ENCODE measurements at regions of chr11 and their contacts with region 1.

Region 1: DNA sequence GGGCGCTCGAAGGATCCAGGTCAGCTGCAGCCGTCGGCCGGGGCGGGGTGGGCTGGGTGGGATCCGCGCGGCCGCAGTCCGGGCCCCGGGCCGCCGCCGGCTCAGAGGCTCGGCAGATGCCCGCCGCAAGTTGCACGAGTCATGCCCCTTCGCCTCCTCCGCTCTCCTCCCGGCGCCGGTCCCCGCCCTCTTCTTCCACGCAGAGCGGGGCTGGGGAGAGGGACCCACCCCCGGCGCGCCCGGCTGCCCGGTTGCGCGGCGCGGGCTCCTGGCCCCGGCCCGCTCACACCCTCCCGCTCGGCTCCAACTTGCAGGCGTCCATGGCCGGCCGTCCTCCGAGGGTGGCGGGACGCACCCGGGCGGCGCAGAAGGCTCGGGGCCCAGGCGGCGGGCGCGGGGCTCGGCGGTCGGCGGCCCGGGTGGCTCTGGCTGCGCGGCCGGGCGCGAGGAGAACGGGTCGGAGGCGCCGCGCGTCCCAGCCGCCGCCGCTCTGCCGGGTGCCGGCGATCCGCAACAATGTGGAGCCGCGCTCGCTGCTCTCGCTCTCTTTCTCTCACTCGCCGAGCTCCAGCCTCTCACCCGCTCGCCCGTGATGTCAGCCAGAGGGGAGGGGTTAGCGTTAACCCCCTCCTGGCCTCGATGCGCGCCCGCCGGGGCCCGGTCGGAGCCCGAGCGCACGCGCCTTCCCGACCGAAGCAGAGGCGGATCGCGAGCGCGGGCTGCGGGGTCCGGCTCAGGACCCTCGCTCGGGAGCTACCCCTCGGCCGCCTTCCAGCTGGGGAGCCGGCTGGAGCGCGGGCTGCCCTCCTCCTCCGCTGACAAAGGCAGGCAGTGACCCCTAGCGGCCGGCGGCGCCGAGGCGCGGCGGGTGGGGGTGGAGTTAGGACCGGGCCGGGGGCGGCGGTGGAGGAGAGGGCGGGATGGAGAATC is at the start of gene NECTIN1:
- DNase-seq: peak; percentile 88
- H3K4me3 Mint-ChIP-seq: peak within 1 kb of the TSS; percentile 81
- H3K27ac Mint-ChIP-seq: no peak within 1 kb of the TSS
- H3K4me1 Mint-ChIP-seq: peaks cover 14% of the 10 kb centered on the region
- H3K27me3 Mint-ChIP-seq: peaks cover 20% of the 10 kb centered on the region
- total RNA-seq, gene NECTIN1: 2.0 to 2.5 TPM

Region 2: DNA sequence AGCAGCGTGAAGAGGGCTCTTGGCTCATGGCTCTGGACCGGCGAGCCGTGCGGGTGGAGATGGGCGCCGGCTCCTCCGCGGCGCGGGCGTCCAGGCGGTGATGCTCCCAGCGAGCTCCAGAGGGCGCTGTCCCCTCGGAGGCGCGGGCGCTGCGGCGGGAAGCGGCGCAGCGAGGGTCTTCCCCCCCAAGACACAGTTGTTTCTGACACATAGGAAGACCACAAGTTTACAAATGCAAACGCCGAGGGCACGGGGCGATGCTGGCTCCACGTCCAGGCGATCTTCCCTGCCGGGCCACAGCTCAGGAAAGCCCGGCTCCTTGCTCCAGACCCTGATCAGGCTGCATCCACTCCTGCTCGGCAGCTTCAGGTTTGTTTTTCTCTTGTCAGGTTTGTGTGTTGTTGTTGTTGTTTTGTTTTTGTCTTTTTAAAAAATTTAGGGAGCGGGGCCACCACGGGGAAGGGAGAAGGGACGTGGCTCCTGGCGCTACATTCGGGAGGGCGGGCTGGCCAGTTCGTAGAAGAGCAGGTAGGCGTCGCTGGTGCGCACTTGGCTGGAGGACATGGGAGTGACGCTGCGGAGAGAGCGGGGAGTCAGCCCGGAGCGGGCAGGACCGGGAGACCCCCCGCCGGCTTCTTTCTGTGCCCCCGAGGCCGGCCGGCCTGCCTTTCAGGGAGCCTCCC is 372.4 kb before region 1 on chr11:
- CTCF ChIA-PET with region 1: interaction called, 4 read pairs
- intact Hi-C with region 1: loop called (anchors 10 kb)
- DNase-seq: peak; percentile 84
- H3K4me3 Mint-ChIP-seq: peak overlapping the region; percentile 81
- H3K27ac Mint-ChIP-seq: no peak overlapping the region
- H3K4me1 Mint-ChIP-seq: peaks cover 9% of the 10 kb centered on the region
- H3K27me3 Mint-ChIP-seq: peaks cover 22% of the 10 kb centered on the region

Region 3: DNA sequence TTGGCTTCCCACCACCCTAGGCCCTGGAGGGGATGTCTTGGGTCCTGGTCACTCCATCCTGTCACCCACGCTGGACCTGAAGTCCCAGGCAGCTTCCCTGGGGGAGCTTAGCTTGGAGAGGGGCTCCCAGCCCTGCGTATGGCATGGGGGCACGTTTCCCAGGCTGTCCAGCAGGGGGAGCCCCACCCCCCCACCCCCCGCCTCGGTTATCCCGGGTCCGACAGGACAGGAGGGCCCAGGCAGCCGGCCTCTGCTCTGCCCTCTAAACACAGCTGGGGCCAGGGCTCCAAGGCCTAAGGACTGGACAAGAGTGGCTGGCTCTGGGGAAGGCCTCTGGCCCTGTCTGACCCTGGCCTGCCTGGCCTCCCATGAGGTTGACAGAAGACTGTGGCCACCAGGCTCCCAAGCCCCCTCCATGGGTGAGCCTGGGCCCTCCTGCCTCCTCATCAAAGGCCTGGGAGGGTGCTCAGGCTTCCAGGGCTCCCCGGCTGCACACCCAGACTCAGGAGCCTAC is 104.8 kb before region 1 on chr11:
- CTCF ChIA-PET with region 1: interaction called, 6 read pairs
- intact Hi-C with region 1: loop called (anchors 1 kb)
- DNase-seq: no peak
- H3K4me3 Mint-ChIP-seq: no peak overlapping the region
- H3K27ac Mint-ChIP-seq: no peak overlapping the region
- H3K4me1 Mint-ChIP-seq: no peaks in the 10 kb centered on the region
- H3K27me3 Mint-ChIP-seq: peaks cover 7% of the 10 kb centered on the region

Region 4: DNA sequence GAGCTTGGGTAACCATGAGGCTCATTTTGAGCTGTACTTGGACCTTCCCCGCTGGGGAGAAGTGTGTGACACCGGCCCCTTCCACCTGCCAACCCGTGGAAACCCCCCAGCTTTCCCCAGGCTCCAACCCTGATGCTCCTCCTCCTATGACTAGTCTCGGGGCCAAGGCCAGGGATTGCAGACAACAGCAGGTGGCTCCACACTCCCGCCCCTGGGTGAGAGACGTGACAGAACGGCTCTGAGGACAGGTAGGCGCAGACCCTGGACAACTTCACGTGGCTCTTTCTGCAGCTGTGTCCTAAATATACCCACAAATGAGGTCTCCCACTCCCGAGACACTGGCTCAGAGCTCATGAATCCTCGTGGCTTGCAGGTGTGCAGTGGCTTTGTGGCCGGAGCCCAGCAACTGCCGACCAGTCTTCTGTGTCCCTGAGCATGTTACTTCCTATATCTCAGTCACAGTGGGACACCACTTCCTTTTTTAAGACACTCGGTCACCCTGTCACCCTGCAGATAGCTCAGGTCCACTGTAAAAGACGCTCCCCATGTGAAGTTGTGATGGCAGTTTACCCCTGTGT is 55.1 kb before region 1 on chr11:
- CTCF ChIA-PET with region 1: interaction called, 45 read pairs
- intact Hi-C with region 1: loop called (anchors 1 kb)
- DNase-seq: peak; percentile 87
- H3K4me3 Mint-ChIP-seq: no peak overlapping the region
- H3K27ac Mint-ChIP-seq: no peak overlapping the region
- H3K4me1 Mint-ChIP-seq: peaks cover 9% of the 10 kb centered on the region
- H3K27me3 Mint-ChIP-seq: no peaks in the 10 kb centered on the region

Region 5: GRCh38 chr11:119791047-119791446 is 62.1 kb after region 1 on chr11:
- CTCF ChIA-PET with region 1: no interaction called
- intact Hi-C with region 1: no loop called
- DNase-seq: no peak
- H3K4me3 Mint-ChIP-seq: no peak overlapping the region
- H3K27ac Mint-ChIP-seq: no peak overlapping the region
- H3K4me1 Mint-ChIP-seq: no peaks in the 10 kb centered on the region
- H3K27me3 Mint-ChIP-seq: peaks cover 4% of the 10 kb centered on the region

Region 6: DNA sequence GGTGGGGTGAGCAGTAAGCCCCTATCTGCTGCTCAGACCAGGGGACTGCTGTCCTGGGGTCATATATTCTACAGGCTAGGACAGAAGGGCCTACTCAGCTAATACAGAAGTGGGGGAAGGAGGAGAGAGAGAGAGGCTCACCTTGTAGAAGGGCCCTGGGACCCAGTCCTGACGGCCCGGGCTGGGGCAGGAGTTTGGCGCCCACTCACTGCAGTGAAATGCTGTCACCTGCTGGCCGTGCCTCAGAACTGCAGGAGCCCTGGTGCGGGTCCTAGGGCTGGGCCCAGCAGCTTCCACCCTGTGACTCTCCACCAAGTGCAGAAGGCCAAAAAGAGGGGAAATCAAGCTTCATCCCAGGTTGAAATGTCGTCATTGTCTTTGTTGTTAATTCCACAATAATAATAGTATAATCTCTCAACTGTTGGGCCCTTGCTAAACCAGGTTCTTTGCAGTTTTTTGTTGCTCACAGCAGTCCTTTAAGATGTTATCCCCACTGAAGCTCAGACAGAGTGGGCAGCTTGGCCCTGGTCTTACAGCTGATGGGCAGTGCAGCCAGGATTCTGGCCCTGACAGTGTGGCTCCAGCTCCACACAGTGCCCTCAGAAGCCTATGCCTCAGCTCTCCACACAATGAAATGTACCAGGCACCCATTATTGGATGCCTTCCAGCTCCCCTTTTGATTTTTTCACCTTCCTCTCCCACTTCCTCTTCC is 379.4 kb after region 1 on chr11:
- CTCF ChIA-PET with region 1: interaction called, 5 read pairs
- intact Hi-C with region 1: loop called (anchors 1 kb)
- DNase-seq: peak; percentile 74
- H3K4me3 Mint-ChIP-seq: no peak overlapping the region
- H3K27ac Mint-ChIP-seq: no peak overlapping the region
- H3K4me1 Mint-ChIP-seq: no peaks in the 10 kb centered on the region
- H3K27me3 Mint-ChIP-seq: peaks cover 9% of the 10 kb centered on the region

Region 7: DNA sequence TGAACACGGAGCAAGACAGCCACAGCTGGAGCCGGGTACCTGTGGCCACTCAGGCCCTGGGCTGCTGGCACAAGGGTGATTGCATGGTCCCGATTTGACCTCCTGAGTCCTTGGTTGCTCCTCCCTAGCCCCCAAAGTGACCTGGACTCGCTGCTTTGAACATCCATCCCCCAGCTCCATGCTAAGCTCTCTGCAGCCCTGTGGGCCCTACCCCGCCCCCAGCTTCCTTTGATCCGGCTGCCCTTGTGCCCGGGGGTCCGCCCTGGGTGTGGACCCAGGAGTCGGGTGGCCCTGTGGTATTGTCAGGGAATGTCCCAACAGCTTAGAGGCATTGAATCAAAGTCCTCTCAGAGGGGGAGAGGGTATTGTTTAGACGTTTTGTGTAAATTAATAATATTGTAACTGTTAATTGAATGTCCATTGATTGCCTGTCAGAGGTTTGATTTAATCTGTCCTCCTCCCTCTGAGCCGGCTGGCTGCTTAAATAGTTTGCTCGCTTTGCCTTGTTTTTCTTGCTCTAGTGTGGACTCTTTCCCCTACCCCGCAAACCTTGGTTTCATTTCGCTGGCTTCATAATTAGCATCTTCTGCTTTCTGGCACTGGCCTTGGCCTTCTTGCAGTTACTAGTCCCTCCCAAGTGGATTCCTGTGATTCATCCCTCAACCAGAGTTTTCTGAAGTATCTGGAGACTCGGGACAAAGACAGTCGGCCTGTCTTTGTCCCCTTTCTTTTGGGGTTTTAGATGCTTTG is 803.3 kb after region 1 on chr11:
- CTCF ChIA-PET with region 1: no interaction called
- intact Hi-C with region 1: no loop called
- DNase-seq: no peak
- H3K4me3 Mint-ChIP-seq: no peak overlapping the region
- H3K27ac Mint-ChIP-seq: no peak overlapping the region
- H3K4me1 Mint-ChIP-seq: no peaks in the 10 kb centered on the region
- H3K27me3 Mint-ChIP-seq: peaks cover 2% of the 10 kb centered on the region

Measured in activated naive CD4-positive, alpha-beta T cell treated with anti-CD3 and anti-CD28 coated beads for 36 hours (primary cell).